Activated CD8-positive, alpha-beta memory T cell treated with anti-CD3 and anti-CD28 coated beads, Interleukin-2, amount 10 ng/mL, durations not matched to agents 7 days and 5 days (primary cell): ENCODE measurements at regions of chr17 and their contacts with region 1.

Region 1: DNA sequence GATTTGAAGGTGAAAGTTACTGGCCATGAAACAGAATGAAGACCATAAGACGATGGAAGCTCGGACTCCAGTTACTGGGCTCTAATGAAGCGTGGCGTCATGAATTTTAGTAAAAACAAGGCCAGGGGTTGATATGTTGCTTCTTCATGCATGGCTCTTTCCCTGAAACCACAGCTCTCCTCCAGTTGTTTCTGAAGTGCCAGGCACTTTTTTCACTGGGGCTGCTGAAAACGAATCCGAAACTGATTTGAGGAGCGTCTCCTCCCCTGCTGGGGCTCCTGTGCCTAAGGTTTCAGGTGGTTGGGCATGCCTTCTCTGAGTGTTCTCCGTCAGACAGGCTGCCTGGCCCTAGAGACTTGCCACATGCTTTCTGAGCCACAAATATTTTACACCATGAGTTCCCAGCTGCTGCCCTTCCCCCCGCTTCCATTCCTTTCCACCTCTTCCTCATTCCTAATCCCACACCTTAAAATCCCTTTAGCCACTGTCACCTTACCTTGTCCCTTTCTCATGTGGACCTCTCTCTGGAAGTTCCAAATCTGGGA is 3.7 kb upstream of the MYL4 start:
- DNase-seq: peak; percentile 88
- ATAC-seq: peak; percentile 77
- H3K4me3 Mint-ChIP-seq: peak overlapping the region; percentile 72
- H3K27ac Mint-ChIP-seq: peak overlapping the region; percentile 99
- H3K4me1 Mint-ChIP-seq: peaks cover 52% of the 10 kb centered on the region
- H3K27me3 Mint-ChIP-seq: no peaks in the 10 kb centered on the region

Region 2: GRCh38 chr17:47131761-47132160 is 73.7 kb before region 1 on chr17:
- CTCF ChIA-PET with region 1: no interaction called
- DNase-seq: no peak
- ATAC-seq: no peak
- H3K4me3 Mint-ChIP-seq: no peak overlapping the region
- H3K27ac Mint-ChIP-seq: no peak overlapping the region
- H3K4me1 Mint-ChIP-seq: peaks cover 2% of the 10 kb centered on the region
- H3K27me3 Mint-ChIP-seq: no peaks in the 10 kb centered on the region

Region 3: GRCh38 chr17:47188876-47189731 is 16.4 kb before region 1 on chr17 and contains the start of gene CDC27:
- CTCF ChIA-PET with region 1: interaction called, 45 read pairs
- DNase-seq: peak; percentile 100
- ATAC-seq: peak; percentile 97
- H3K4me3 Mint-ChIP-seq: peak within 1 kb of the TSS; percentile 98
- H3K27ac Mint-ChIP-seq: peak within 1 kb of the TSS; percentile 98
- H3K4me1 Mint-ChIP-seq: peaks cover 52% of the 10 kb centered on the region
- H3K27me3 Mint-ChIP-seq: no peaks in the 10 kb centered on the region
- total RNA-seq, gene CDC27: 151 to 155 TPM

Region 4: GRCh38 chr17:47220531-47220999 is 15.1 kb after region 1 on chr17:
- CTCF ChIA-PET with region 1: interaction called, 18 read pairs
- DNase-seq: peak; percentile 84
- ATAC-seq: peak; percentile 73
- H3K4me3 Mint-ChIP-seq: peak overlapping the region; percentile 32
- H3K27ac Mint-ChIP-seq: peak overlapping the region; percentile 84
- H3K4me1 Mint-ChIP-seq: peaks cover 61% of the 10 kb centered on the region
- H3K27me3 Mint-ChIP-seq: no peaks in the 10 kb centered on the region

Region 5: GRCh38 chr17:47229535-47230443 is 24.3 kb after region 1 on chr17:
- CTCF ChIA-PET with region 1: interaction called, 20 read pairs
- DNase-seq: peak; percentile 84
- ATAC-seq: peak; percentile 95
- H3K4me3 Mint-ChIP-seq: peak overlapping the region; percentile 60
- H3K27ac Mint-ChIP-seq: peak overlapping the region; percentile 24
- H3K4me1 Mint-ChIP-seq: peaks cover 14% of the 10 kb centered on the region
- H3K27me3 Mint-ChIP-seq: peaks cover 13% of the 10 kb centered on the region

Region 6: DNA sequence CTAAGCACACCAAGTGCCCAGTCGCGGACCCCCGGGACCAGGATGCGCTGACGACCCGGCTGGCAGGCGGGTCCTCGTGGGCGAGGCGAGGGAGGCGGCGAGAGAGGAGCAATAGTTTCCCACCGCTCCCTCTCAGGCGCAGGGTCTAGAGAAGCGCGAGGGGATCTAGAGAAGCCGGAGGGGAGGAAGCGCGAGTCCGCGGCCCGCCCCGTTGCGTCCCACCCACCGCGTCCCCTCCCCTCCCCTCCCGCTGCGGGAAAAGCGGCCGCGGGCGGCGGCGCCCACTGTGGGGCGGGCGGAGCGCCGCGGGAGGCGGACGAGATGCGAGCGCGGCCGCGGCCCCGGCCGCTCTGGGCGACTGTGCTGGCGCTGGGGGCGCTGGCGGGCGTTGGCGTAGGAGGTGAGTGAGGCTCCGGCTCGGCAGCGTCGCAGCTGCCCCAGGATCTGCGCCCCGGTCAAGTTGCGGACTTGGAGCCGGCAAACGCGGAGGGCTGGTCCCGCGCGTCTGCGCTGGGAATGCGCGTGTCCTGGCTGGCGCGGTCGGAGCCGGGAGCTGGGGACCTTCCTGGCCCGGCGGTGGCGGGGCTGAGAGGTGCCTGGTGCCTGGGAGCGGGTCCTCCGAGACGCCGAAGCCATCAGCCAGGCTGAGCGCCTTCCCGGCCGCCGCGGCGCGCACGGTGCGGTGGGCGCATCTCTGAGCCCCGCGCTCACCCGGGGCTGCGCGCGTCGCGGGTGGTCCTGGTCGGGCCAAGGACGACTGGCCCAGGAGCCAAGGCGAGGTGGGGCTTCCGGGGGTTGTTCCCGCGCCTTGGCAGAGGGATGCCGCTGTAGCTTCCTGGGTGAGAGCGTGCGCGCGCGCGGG is 48.3 kb after region 1 on chr17 and contains the start of gene ITGB3:
- CTCF ChIA-PET with region 1: no interaction called
- DNase-seq: peak; percentile 79
- ATAC-seq: peak; percentile 99
- H3K4me3 Mint-ChIP-seq: peak within 1 kb of the TSS; percentile 77
- H3K27ac Mint-ChIP-seq: no peak within 1 kb of the TSS
- H3K4me1 Mint-ChIP-seq: peaks cover 33% of the 10 kb centered on the region
- H3K27me3 Mint-ChIP-seq: peaks cover 71% of the 10 kb centered on the region
- total RNA-seq, gene ITGB3: 0.21 to 0.93 TPM